Transverse colon (tissue), 4 donors: ENCODE measurements at regions of chr12 and their contacts with region 1.

Region 1: GRCh38 chr12:102394200-102394599 is 86.2 kb downstream of the IGF1 start:
- DNase-seq: no peak
- H3K4me3 ChIP-seq: no peak overlapping the region
- H3K27ac ChIP-seq: no peak overlapping the region
- H3K4me1 ChIP-seq: no peaks in the 10 kb centered on the region
- H3K27me3 ChIP-seq: no peaks in the 10 kb centered on the region
- CTCF ChIP-seq: no peak
- EP300 ChIP-seq: no peak
- POLR2A ChIP-seq: no peak

Region 2: DNA sequence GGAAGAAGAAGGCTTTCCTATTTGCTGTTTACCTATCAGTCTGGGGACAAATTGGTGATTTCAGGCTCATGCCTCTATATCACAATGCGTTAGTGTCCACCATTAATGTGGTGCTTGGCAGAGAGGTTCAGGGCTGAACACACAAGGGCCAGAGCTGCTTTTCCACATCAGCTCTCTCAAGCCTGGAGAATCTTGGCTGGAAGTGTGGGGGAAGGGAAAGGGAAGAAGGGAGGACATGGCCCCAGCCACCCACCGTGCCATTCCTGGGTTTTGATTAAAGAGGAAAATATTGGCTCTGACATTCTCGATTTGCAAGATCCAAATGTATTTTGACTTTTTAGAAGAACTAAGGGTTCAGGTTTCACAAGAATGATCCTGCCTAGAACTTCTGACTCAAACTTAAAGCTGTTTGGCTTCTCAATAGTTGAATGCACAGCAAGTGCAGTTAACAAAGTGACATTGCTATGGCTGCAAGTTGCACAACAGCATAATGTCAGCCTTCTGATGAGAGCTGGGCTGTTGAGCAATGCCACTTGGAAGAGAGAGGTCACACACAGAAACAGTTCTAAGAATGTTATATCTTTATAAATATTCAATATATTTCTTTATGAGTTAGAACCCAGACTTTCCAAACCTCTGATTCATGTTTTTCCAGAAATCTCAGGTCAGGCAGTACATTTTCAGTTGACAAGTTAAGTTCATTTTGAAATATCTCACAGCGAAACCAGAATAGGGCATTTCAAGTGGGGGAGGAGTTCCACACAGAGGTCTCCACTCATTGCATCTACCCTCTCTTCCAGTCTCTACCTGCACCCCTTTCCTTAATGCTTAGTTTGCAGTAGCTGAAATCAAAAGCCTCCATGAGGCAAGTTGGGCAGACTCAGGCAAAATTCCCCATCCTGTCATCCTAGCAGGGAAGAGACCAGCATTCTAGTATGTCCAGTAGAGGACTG is 60.9 kb after region 1 on chr12:
- in situ Hi-C with region 1: loop called in 1 of 4 experiments (anchors 10 kb)
- intact Hi-C with region 1: no loop called
- DNase-seq: peak; percentile 19
- H3K4me3 ChIP-seq: no peak overlapping the region
- H3K27ac ChIP-seq: peak overlapping the region in 1 of 4 donors; percentile 31
- H3K4me1 ChIP-seq: no peaks in the 10 kb centered on the region
- H3K27me3 ChIP-seq: no peaks in the 10 kb centered on the region
- CTCF ChIP-seq: no peak
- EP300 ChIP-seq: no peak
- POLR2A ChIP-seq: no peak

Region 3: DNA sequence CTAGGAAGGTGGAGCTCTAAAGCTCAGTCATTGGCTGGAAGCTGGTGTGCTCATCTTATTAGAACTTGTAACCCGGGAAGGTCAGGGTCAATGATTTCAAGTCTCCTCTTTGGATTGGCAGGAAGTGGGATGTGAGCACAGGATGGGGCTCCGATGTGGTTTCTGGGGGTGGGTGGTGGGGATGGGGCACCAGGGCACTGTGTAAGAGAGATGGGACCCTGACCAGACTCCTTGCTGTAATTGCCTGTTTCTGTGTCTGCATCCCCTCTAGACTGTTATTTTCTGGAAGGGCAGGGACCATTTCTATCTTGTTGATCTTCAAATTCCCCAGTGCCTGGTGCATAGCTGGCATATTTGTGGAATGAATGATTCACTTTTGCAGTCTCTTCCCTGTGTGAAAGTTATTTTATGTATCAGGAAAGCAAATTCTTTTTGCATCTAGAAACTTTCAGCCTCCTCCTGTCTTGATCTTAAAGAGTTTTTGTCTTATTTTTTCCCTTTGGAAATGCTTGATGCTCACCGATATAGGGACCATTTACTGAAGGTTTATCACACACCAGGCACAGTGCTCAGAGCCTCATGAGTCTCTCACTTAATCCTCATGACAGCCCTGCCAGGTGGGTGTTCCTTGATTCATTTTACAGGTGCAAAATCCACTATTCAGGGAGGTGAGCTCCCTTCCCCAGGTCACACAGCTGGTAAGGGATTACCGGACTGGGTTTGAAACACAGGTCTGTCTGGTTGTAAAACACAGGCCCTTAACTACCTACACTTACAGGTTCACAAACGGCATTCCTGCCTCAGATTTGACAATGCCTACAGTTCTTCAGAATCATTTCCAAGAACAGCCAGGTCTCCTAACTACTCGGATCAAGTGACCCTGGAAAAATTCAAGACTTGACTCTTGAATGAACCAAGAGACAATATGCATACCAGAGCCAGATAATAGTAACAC is 173.1 kb after region 1 on chr12:
- in situ Hi-C with region 1: no loop called
- intact Hi-C with region 1: no loop called
- DNase-seq: no peak
- H3K4me3 ChIP-seq: no peak overlapping the region
- H3K27ac ChIP-seq: no peak overlapping the region
- H3K4me1 ChIP-seq: no peaks in the 10 kb centered on the region
- H3K27me3 ChIP-seq: no peaks in the 10 kb centered on the region
- CTCF ChIP-seq: no peak
- EP300 ChIP-seq: no peak
- POLR2A ChIP-seq: no peak